MCF 10A (cell line): ENCODE measurements at regions of chr3 and their contacts with region 1.

Region 1: DNA sequence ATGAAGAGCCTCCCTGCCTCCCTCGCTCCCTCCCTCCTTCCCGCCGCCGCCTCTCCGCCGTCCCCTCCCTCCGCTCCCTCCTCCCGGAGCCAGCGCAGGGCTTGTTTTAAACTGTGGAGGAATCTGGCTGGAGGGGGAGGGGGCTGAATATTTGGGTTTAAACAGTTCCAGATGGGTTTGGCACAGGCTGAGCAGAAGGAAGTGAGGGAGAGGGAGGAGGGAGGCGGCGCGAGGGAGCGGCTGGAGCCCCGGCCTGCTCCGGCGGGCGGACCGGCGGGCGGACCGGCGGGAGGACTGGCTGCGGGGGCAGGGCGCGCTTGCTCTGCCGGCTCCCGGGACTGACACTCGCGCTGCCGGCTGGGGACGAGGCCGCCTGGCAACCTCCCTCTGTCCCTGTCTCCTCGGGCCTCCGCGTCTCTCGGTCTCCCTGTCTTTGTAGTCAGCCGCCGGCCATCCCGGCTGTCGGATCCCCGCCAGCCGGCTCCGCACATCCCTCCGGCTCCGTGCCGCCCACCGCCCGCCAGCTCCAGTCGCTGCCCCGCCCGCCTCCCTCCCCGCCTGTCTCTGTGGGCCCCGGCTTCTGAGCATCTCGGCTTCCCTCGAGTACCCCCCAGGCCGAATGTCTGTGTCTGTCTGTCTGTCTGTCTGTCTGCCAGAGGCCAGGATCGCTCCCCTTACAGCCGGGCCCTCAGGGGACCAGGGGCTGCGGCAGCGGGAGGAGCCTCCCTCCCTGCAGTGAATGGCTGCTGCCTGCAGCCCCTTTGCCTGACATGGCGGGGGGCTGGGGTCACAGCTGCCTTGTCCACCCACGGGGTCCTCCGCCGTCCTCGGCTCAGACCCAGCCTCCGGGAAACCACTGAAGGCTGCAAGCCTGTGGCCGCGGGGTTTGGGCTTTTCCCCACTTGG is 7.6 kb downstream of the EPHB3 start:
- DNase-seq: peak; percentile 78
- H3K4me3 Mint-ChIP-seq: peak overlapping the region; percentile 73
- H3K27ac Mint-ChIP-seq: no peak overlapping the region
- H3K4me1 Mint-ChIP-seq: peaks cover 32% of the 10 kb centered on the region
- H3K27me3 Mint-ChIP-seq: no peaks in the 10 kb centered on the region
- CTCF ChIP-seq: no peak

Region 2: GRCh38 chr3:184611607-184612281 is 42.6 kb after region 1 on chr3:
- CTCF ChIA-PET with region 1: no interaction called
- POLR2A ChIA-PET with region 1: no interaction called
- intact Hi-C with region 1: no loop called
- DNase-seq: no peak
- H3K4me3 Mint-ChIP-seq: no peak overlapping the region
- H3K27ac Mint-ChIP-seq: no peak overlapping the region
- H3K4me1 Mint-ChIP-seq: no peaks in the 10 kb centered on the region
- H3K27me3 Mint-ChIP-seq: no peaks in the 10 kb centered on the region
- CTCF ChIP-seq: no peak

Region 3: DNA sequence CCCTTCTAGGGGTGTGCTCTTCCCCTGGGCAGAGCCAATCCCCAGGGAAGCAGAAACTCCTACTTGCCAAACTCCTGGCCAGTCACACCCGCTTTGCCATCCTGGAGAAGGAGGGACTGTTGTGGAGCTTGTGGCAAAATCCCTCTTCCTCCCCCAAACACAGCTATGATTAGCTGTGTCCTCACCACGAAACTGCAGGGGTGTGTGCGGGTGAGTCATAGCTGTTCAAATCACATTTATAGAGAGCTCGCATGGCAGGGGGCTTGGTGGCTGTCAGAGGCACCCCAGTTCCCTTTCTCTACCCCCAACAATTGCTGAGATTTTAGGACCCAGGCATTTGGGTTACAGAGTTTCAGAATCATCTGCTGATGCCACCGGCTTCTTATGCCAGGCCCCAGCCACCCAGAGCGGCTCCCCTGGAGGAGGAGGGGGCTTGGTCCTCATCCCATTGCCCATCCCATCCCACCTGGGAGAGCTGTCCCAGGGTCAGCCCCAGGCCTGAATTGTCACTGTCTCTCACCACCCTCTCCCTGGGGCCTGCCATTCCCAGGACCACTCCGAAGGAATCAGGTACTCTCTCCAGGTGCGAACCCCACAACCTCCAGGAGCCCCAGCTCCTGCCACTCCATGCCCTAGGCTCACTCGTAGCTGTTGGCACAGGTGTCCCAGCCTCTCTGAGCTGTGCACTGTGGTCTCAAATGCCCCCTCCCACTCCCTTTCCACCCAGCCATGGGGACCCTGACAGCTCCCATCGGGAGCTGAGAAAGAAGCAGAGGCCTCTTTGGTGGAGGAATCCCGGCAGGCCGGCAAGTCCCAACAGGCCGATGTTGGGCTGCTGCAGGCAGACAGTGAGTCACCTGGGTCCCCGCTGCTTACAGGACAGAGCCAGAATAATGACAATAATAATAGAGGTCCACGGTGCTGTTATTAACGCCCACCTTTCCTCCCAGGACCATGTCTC is 171.6 kb after region 1 on chr3:
- CTCF ChIA-PET with region 1: interaction called, 6 read pairs
- POLR2A ChIA-PET with region 1: interaction called, 10 read pairs
- intact Hi-C with region 1: no loop called
- DNase-seq: peak; percentile 96
- H3K4me3 Mint-ChIP-seq: peak overlapping the region; percentile 68
- H3K27ac Mint-ChIP-seq: peak overlapping the region; percentile 93
- H3K4me1 Mint-ChIP-seq: peaks cover 48% of the 10 kb centered on the region
- H3K27me3 Mint-ChIP-seq: no peaks in the 10 kb centered on the region
- CTCF ChIP-seq: no peak

Region 4: GRCh38 chr3:184748219-184749135 is 179.3 kb after region 1 on chr3:
- CTCF ChIA-PET with region 1: interaction called, 13 read pairs
- POLR2A ChIA-PET with region 1: interaction called, 9 read pairs
- intact Hi-C with region 1: no loop called
- DNase-seq: peak; percentile 73
- H3K4me3 Mint-ChIP-seq: no peak overlapping the region
- H3K27ac Mint-ChIP-seq: no peak overlapping the region
- H3K4me1 Mint-ChIP-seq: peaks cover 18% of the 10 kb centered on the region
- H3K27me3 Mint-ChIP-seq: no peaks in the 10 kb centered on the region
- CTCF ChIP-seq: peak; percentile 60